HepG2 (cell line): ENCODE measurements at regions of chr2 and their contacts with region 1.

Region 1: GRCh38 chr2:152730591-152731303 is 12.3 kb downstream of the ARL6IP6 start:
- DNase-seq: no peak
- ATAC-seq: peak; percentile 71
- H3K4me3 ChIP-seq: no peak overlapping the region
- H3K27ac ChIP-seq: no peak overlapping the region
- H3K4me1 ChIP-seq: peaks cover 11% of the 10 kb centered on the region
- H3K27me3 ChIP-seq: no peaks in the 10 kb centered on the region
- CTCF ChIP-seq: no peak
- EP300 ChIP-seq: no peak
- POLR2A ChIP-seq: no peak
- RAD21 ChIP-seq: no peak

Region 2: GRCh38 chr2:152186262-152186661 is 544.5 kb before region 1 on chr2:
- CTCF ChIA-PET with region 1: no interaction called
- POLR2A ChIA-PET with region 1: no interaction called
- in situ Hi-C with region 1: no loop called
- intact Hi-C with region 1: no loop called
- DNase-seq: no peak
- ATAC-seq: no peak
- H3K4me3 ChIP-seq: no peak overlapping the region
- H3K27ac ChIP-seq: no peak overlapping the region
- H3K4me1 ChIP-seq: peaks cover 30% of the 10 kb centered on the region; the same call in 1 of the 2 replicates
- H3K27me3 ChIP-seq: peaks cover 0 to 2% of the 10 kb centered on the region in 2 experiments; a peak in 1 of 5 replicates
- CTCF ChIP-seq: no peak
- EP300 ChIP-seq: no peak
- POLR2A ChIP-seq: no peak
- RAD21 ChIP-seq: no peak

Region 3: GRCh38 chr2:152263911-152264310 is 466.8 kb before region 1 on chr2:
- CTCF ChIA-PET with region 1: no interaction called
- POLR2A ChIA-PET with region 1: no interaction called
- in situ Hi-C with region 1: no loop called
- intact Hi-C with region 1: no loop called
- DNase-seq: no peak
- ATAC-seq: no peak
- H3K4me3 ChIP-seq: no peak overlapping the region
- H3K27ac ChIP-seq: no peak overlapping the region
- H3K4me1 ChIP-seq: no peaks in the 10 kb centered on the region
- H3K27me3 ChIP-seq: no peaks in the 10 kb centered on the region; a peak in 1 of 5 replicates
- CTCF ChIP-seq: no peak
- EP300 ChIP-seq: no peak
- POLR2A ChIP-seq: no peak
- RAD21 ChIP-seq: no peak

Region 4: DNA sequence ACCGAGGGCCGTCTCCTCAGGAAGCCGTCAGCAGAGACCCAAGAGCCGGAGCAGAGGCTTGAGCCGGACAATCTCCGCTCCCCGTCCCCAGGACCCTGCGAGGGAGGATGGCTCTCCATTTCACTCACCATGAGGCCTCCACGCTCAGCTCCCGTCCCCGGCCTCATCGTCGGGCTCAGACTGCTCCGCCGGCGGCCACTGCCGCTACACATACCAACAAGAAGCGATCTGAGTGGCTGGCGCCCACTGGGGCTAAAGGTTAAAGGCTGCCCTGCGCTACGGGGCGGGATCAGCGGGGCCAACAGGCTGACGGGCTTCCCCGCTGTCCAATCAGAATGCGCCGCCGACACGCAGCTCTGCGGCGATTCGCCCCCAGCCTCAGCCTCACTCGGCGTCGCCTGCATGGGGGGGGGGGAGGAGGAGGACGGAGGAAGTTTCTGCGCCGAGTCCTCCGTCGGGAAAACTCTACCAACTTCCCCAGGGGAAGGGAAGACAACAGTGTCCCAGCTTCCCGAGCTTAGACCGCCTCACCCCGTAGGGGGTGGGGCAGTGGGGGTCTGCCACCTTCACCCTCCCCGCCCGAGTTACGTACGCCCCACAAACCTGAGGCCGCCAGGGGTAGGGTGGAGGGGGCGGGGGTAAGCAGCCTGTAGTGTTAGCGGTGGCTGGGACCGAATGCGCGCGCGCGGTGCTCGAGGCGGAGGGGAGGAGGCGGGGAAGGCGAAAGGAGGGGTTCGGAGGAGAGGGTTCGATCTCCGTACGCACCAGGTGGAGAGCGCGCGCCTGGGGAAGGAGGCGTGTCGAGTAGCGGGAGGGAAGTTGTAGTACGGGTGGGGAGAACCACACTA is 13.3 kb before region 1 on chr2 and contains the start of gene PRPF40A:
- CTCF ChIA-PET with region 1: no interaction called
- POLR2A ChIA-PET with region 1: interaction called, 20 read pairs
- in situ Hi-C with region 1: no loop called
- intact Hi-C with region 1: no loop called
- DNase-seq: peak; percentile 97
- ATAC-seq: peak; percentile 82
- H3K4me3 ChIP-seq: peak within 1 kb of the TSS; percentile 75 to 96 (median 82)
- H3K27ac ChIP-seq: peak within 1 kb of the TSS; percentile 97
- H3K4me1 ChIP-seq: peaks cover 62% of the 10 kb centered on the region
- H3K27me3 ChIP-seq: no peaks in the 10 kb centered on the region; a peak in 1 of 5 replicates
- CTCF ChIP-seq: no peak
- EP300 ChIP-seq: 0 out of 4 replicates have a peak, but pooled peaks of 1 of the 2 experiments have one; percentile 17
- POLR2A ChIP-seq: peak; percentile 83 to 93
- RAD21 ChIP-seq: 0 out of 2 replicates have a peak, but pooled peaks have one; percentile 19
- total RNA-seq, gene PRPF40A: 207 and 298 TPM in 2 replicates

Region 5: GRCh38 chr2:152804687-152805408 is 74.1 kb after region 1 on chr2:
- CTCF ChIA-PET with region 1: no interaction called
- POLR2A ChIA-PET with region 1: no interaction called
- in situ Hi-C with region 1: no loop called
- intact Hi-C with region 1: no loop called
- DNase-seq: no peak
- ATAC-seq: peak; percentile 33; the same call in 2 of the 3 replicates
- H3K4me3 ChIP-seq: no peak overlapping the region
- H3K27ac ChIP-seq: no peak overlapping the region
- H3K4me1 ChIP-seq: no peaks in the 10 kb centered on the region
- H3K27me3 ChIP-seq: peaks cover 2 to 3% of the 10 kb centered on the region in 2 experiments; a peak in 2 of 5 replicates
- CTCF ChIP-seq: no peak
- EP300 ChIP-seq: no peak
- POLR2A ChIP-seq: no peak
- RAD21 ChIP-seq: no peak

Region 6: DNA sequence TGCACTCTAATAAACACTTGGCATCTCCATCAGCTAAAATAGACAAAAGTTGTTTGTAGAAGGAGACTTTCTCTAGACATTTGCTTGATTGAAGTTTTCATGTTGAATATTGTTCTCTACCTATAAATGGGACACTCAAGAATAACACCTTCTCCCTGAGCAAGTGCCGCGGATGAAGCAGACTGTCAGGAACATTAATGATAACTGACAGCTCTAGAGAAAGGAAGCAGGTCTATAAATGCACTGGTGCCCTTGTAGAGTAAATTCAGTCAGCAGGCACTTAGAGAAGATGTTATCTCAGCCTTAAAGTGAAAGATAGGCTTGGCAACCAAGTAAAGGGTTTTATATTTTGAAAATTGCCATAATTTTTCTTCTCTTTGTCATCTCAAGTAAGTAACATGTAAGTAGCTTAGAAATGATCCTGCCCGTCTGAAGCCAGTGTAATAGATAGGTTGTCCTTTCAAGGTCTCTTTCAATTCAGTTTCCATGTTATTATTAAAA is 212.2 kb after region 1 on chr2:
- CTCF ChIA-PET with region 1: no interaction called
- POLR2A ChIA-PET with region 1: no interaction called
- in situ Hi-C with region 1: no loop called
- intact Hi-C with region 1: no loop called
- DNase-seq: no peak
- ATAC-seq: no peak
- H3K4me3 ChIP-seq: no peak overlapping the region
- H3K27ac ChIP-seq: no peak overlapping the region
- H3K4me1 ChIP-seq: no peaks in the 10 kb centered on the region
- H3K27me3 ChIP-seq: no peaks in the 10 kb centered on the region
- CTCF ChIP-seq: no peak
- EP300 ChIP-seq: no peak
- POLR2A ChIP-seq: no peak
- RAD21 ChIP-seq: no peak